Activated B cell treated with CpG ODN at 0.5 μM for 24 hours (primary cell): ENCODE measurements at regions of chr4 and their contacts with region 1.

Region 1: DNA sequence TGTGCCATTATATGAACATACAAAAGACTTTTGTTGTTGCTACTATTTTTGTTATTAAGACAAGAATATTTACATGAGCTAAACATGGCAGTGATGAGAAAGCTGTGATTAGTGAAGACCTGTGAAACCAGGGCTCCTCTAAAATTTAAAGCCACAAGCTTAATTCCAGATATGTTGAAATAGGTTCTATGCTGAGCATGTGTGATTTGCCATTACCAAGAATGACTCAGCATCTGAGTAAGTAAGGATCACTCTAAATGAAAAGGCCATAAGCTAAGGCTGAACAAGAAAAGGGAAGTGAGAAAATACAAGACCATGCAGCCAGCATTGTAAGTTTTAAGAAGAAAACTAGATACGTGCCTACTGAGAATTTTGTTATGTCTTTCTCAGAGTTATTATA is 75.9 kb upstream of the CAMK2D start:
- DNase-seq: no peak
- ATAC-seq: peak; percentile 98
- H3K4me3 Mint-ChIP-seq: no peak overlapping the region
- H3K27ac Mint-ChIP-seq: peak overlapping the region; percentile 64
- H3K4me1 Mint-ChIP-seq: peaks cover 24% of the 10 kb centered on the region
- H3K27me3 Mint-ChIP-seq: no peaks in the 10 kb centered on the region
- CTCF ChIP-seq: no peak

Region 2: DNA sequence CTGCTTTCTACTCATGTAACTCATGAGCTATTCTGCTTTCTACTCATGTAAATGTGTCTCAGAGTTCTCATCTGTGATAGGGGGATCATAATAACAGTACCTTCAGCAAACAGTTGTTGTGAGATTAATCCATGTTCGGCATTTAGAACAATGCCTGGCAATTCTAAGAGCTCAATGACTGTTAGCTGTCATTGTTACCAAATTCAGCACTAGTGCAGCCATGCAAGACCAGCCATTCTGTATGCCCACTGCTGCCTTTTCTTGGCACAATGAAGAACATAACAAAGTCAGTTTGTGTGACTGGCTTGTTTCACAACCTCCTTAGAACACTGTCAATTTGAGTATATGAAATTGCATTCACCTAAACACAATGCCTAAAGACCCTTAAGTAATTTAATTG is 624.8 kb before region 1 on chr4:
- CTCF ChIA-PET with region 1: no interaction called
- POLR2A ChIA-PET with region 1: no interaction called
- intact Hi-C with region 1: no loop called
- DNase-seq: no peak
- ATAC-seq: no peak
- H3K4me3 Mint-ChIP-seq: no peak overlapping the region
- H3K27ac Mint-ChIP-seq: no peak overlapping the region
- H3K4me1 Mint-ChIP-seq: no peaks in the 10 kb centered on the region
- H3K27me3 Mint-ChIP-seq: no peaks in the 10 kb centered on the region
- CTCF ChIP-seq: no peak

Region 3: DNA sequence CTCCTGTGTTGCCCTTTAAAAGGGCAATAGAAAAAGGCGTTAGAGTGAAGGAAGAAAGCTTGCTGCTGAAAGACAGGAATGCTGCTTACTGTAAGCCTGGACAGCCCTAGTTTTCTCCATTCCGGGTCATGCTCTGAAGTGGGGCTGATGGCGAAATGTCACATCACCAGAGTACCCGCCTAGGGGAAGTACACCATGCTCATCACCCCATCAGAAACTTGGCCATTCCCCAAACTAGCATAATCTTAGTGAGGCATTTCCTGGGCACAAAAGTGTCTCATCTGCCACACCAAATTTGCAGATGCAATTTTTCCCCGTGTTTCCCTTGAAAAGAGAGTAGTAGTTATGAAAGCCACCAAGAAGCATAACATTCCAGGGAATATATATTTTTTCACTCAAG is 28.1 kb before region 1 on chr4:
- CTCF ChIA-PET with region 1: no interaction called
- POLR2A ChIA-PET with region 1: no interaction called
- intact Hi-C with region 1: no loop called
- DNase-seq: no peak
- ATAC-seq: no peak
- H3K4me3 Mint-ChIP-seq: no peak overlapping the region
- H3K27ac Mint-ChIP-seq: no peak overlapping the region
- H3K4me1 Mint-ChIP-seq: no peaks in the 10 kb centered on the region
- H3K27me3 Mint-ChIP-seq: peaks cover 2% of the 10 kb centered on the region
- CTCF ChIP-seq: no peak

Region 4: DNA sequence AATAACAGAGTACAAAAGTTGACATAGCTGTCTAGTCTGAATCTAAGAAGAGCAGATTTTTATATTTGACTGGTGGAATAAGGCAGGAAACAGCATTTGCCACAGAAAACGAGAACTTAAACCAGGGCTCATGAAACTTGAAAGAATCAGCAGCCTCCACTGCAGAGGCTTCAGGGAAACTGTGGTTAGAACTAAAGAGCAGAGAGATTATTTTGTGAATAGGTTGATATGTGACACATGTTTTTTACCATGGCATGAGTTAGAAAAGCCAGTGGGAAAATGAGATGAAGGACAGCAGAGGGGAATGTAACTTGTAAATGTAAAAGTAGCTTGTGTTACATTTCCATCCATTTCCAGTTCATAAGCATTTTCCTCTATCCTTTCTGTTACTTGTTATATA is 12.1 kb before region 1 on chr4:
- CTCF ChIA-PET with region 1: no interaction called
- POLR2A ChIA-PET with region 1: interaction called, 3 read pairs
- intact Hi-C with region 1: loop called (anchors 1 kb)
- DNase-seq: no peak
- ATAC-seq: peak; percentile 49
- H3K4me3 Mint-ChIP-seq: no peak overlapping the region
- H3K27ac Mint-ChIP-seq: no peak overlapping the region
- H3K4me1 Mint-ChIP-seq: peaks cover 22% of the 10 kb centered on the region
- H3K27me3 Mint-ChIP-seq: peaks cover 3% of the 10 kb centered on the region
- CTCF ChIP-seq: no peak

Region 5: GRCh38 chr4:113849771-113850170 is 12.4 kb after region 1 on chr4:
- CTCF ChIA-PET with region 1: no interaction called
- POLR2A ChIA-PET with region 1: no interaction called
- intact Hi-C with region 1: no loop called
- DNase-seq: no peak
- ATAC-seq: no peak
- H3K4me3 Mint-ChIP-seq: no peak overlapping the region
- H3K27ac Mint-ChIP-seq: no peak overlapping the region
- H3K4me1 Mint-ChIP-seq: peaks cover 5% of the 10 kb centered on the region
- H3K27me3 Mint-ChIP-seq: no peaks in the 10 kb centered on the region
- CTCF ChIP-seq: no peak

Region 6: GRCh38 chr4:113869743-113870375 is 32.5 kb after region 1 on chr4:
- CTCF ChIA-PET with region 1: no interaction called
- POLR2A ChIA-PET with region 1: no interaction called
- intact Hi-C with region 1: loop called (anchors 1 kb)
- DNase-seq: peak; percentile 40
- ATAC-seq: peak; percentile 94
- H3K4me3 Mint-ChIP-seq: peak overlapping the region; percentile 63
- H3K27ac Mint-ChIP-seq: peak overlapping the region; percentile 90
- H3K4me1 Mint-ChIP-seq: peaks cover 19% of the 10 kb centered on the region
- H3K27me3 Mint-ChIP-seq: no peaks in the 10 kb centered on the region
- CTCF ChIP-seq: no peak

Region 7: GRCh38 chr4:113901994-113902787 is 64.8 kb after region 1 on chr4:
- CTCF ChIA-PET with region 1: no interaction called
- POLR2A ChIA-PET with region 1: no interaction called
- intact Hi-C with region 1: loop called (anchors 5 kb)
- DNase-seq: no peak
- ATAC-seq: no peak
- H3K4me3 Mint-ChIP-seq: no peak overlapping the region
- H3K27ac Mint-ChIP-seq: no peak overlapping the region
- H3K4me1 Mint-ChIP-seq: peaks cover 13% of the 10 kb centered on the region
- H3K27me3 Mint-ChIP-seq: no peaks in the 10 kb centered on the region
- CTCF ChIP-seq: no peak